MCF 10A (cell line): ENCODE measurements at regions of chr2 and their contacts with region 1.

Region 1: DNA sequence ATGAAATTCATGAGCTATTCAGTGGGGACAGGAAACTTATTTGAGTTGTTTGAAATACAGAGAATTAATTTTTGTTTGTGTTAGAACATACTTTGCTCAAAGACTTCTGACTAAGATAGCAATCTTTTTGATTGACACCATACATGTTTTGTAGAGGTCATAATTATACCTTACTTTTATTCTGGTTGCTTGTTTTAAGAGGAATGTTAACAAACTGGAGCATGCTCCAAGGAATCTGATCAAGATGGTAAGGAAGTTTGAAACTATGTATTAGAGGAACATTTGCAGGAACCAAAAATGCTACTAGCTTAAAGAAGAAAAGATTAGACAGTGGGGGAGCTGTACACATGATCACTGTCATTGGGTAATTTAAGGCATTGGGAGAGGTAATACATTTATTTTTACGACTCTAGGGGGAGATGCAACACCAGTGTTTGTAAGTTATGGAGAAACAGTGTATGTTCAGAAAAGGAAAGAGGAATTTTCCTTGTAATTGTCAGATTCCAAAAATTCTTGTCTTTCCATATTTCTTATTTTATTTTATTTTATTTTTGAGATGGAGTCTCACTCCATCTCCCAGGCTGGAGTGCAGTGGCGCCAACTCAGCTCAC is 8.0 kb downstream of the AGFG1 start:
- DNase-seq: peak; percentile 63
- H3K4me3 Mint-ChIP-seq: no peak overlapping the region
- H3K27ac Mint-ChIP-seq: peak overlapping the region; percentile 47
- H3K4me1 Mint-ChIP-seq: peaks cover 39% of the 10 kb centered on the region
- H3K27me3 Mint-ChIP-seq: no peaks in the 10 kb centered on the region
- CTCF ChIP-seq: peak; percentile 43

Region 2: DNA sequence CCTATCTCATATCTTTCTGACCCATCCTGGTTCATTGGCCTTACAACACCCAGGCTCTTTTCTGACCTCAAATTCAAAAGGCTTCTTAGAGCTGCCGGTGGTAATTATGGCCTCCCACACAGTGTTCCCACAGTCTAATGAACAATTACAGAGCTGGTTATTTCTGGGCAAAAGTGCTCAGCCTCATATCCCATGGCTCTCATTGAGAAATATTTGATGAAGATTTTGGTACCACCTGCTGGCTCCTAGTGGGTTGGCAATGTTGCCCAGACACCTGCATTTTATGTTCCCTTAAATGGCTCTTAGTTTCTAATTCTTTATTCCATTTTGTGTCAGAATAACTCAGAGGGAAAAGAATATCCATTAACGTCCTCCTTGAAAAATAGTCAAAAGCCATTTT is 98.7 kb after region 1 on chr2:
- CTCF ChIA-PET with region 1: no interaction called
- POLR2A ChIA-PET with region 1: no interaction called
- intact Hi-C with region 1: loop called (anchors 5 kb)
- DNase-seq: no peak
- H3K4me3 Mint-ChIP-seq: no peak overlapping the region
- H3K27ac Mint-ChIP-seq: no peak overlapping the region
- H3K4me1 Mint-ChIP-seq: no peaks in the 10 kb centered on the region
- H3K27me3 Mint-ChIP-seq: no peaks in the 10 kb centered on the region
- CTCF ChIP-seq: no peak